ENCODE measurements at regions of chrX and their contacts with region 1.

Region 1: DNA sequence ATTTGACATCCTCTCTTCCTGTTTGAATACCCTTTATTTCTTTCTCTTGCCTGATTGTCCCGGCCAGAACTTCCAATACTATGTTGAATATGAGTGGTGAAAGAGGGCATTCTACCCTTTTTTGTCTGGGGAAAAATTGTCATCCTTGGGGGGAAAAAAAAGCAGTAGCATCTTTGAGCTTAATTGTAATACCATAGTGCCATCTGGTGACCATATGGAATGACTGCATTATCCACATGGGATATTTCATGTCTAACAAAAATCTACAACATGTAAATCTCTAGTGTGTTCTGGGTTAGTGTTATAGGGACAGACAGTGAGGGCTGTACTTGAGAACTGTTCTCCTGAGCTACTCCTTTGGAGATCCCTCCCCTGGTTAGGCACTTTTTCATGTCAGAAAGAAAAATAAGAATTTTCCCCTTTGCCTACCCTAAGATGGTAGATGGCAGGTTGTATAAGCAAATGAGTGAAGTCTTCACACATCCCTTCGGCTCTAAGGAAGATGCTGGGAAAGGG is 26.0 kb downstream of the CAPN6 start:
- DNase-seq: no peak
- ATAC-seq: 0 out of 3 replicates have a peak, but pooled peaks have one; percentile 34
- H3K4me3 ChIP-seq: no peak overlapping the region
- H3K27ac ChIP-seq: no peak overlapping the region
- H3K4me1 ChIP-seq: no peaks in the 10 kb centered on the region
- H3K27me3 ChIP-seq: no peaks in the 10 kb centered on the region
- CTCF ChIP-seq: peak; percentile 35 to 58 (median 51); a peak in 4 of 6 replicates
- EP300 ChIP-seq: no peak
- POLR2A ChIP-seq: no peak
- RAD21 ChIP-seq: peak; percentile 78

Region 2: DNA sequence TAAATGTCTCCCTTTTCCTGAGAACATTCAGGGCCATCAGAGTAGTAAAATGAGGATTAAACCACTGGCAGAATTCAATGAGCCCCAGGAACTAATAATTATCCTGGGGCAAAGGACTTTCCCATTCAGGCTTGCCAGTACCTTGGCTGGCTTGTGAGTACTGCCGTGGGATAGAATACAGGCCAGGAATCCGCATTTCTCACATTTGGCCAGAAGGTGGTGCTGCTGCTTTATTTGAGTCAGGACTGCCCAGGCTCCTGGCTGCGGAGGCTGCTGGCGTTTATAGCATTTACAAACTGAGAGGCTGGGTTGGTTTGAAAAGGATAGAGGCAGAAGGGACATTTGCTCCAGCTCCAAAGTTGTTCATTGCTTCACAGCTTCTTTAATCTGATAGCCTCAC is 794.2 kb before region 1 on chrX:
- CTCF ChIA-PET with region 1: no interaction called
- POLR2A ChIA-PET with region 1: no interaction called
- RAD21 ChIA-PET with region 1: no interaction called
- SMC1A ChIA-PET with region 1: no interaction called
- in situ Hi-C with region 1: no loop called
- intact Hi-C with region 1: loop called (anchors 5 kb)
- DNase-seq: peak; percentile 20
- ATAC-seq: peak; percentile 99
- H3K4me3 ChIP-seq: no peak overlapping the region
- H3K27ac ChIP-seq: no peak overlapping the region
- H3K4me1 ChIP-seq: no peaks in the 10 kb centered on the region
- H3K27me3 ChIP-seq: peaks cover 0 to 4% of the 10 kb centered on the region in 2 experiments; a peak in 2 of 4 replicates
- CTCF ChIP-seq: peak; percentile 78 to 85 (median 84)
- EP300 ChIP-seq: no peak
- POLR2A ChIP-seq: no peak
- RAD21 ChIP-seq: peak; percentile 89

Region 3: DNA sequence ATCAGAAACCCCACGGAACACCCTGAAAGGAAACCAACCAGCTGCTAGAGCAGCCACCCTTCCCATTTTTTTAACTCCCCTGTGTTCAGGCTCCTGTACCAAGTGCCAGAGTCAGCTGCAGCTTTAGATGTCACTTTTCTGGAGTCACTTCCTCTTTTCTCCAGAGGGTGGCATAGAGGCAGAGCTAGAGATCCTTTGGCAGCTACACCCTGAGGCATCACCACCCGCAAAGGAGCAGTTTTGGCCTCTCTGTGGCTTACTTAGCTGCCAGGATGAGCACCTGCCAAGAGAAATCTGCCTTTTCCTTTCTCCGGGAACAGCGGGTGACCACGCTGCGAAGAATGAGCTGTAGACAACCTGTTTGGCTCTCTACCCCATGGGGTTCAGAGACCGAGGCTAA is 390.7 kb before region 1 on chrX:
- CTCF ChIA-PET with region 1: interaction called, 4 read pairs
- POLR2A ChIA-PET with region 1: no interaction called
- RAD21 ChIA-PET with region 1: no interaction called
- SMC1A ChIA-PET with region 1: no interaction called
- in situ Hi-C with region 1: loop called (anchors 10 kb)
- intact Hi-C with region 1: loop called (anchors 10 kb)
- DNase-seq: no peak
- ATAC-seq: peak; percentile 67
- H3K4me3 ChIP-seq: no peak overlapping the region
- H3K27ac ChIP-seq: no peak overlapping the region
- H3K4me1 ChIP-seq: no peaks in the 10 kb centered on the region; the same call in 1 of the 2 replicates
- H3K27me3 ChIP-seq: no peaks in the 10 kb centered on the region
- CTCF ChIP-seq: 0 out of 6 replicates have a peak, but pooled peaks of 1 of the 3 experiments have one; percentile 8
- EP300 ChIP-seq: no peak
- POLR2A ChIP-seq: no peak
- RAD21 ChIP-seq: no peak

Region 4: DNA sequence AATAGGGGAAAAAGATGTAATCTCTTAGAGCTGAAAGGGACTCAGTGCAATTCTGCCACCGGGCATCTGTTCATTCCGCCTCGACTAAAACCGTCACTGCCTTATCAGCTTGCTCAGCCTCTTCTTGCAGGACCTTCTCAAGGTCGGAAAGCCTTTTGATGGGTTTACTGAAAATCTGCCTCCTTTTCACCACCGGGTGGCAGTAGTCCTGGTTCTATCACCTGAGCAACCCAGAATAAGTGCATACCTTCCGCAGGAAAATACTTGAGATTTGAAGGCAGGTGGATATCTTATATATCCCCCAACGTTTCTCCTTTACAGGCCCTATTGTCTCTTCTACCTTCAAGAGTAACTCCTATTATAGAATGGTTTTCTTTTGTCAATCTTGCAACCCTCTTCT is 251.7 kb before region 1 on chrX:
- CTCF ChIA-PET with region 1: interaction called, 5 read pairs
- POLR2A ChIA-PET with region 1: no interaction called
- RAD21 ChIA-PET with region 1: interaction called, 3 read pairs
- SMC1A ChIA-PET with region 1: interaction called, 3 read pairs
- in situ Hi-C with region 1: loop called (anchors 10 kb)
- intact Hi-C with region 1: loop called (anchors 1 kb)
- DNase-seq: no peak
- ATAC-seq: peak; percentile 76
- H3K4me3 ChIP-seq: no peak overlapping the region
- H3K27ac ChIP-seq: no peak overlapping the region
- H3K4me1 ChIP-seq: no peaks in the 10 kb centered on the region
- H3K27me3 ChIP-seq: no peaks in the 10 kb centered on the region
- CTCF ChIP-seq: peak; percentile 49 to 61 (median 56)
- EP300 ChIP-seq: no peak
- POLR2A ChIP-seq: no peak
- RAD21 ChIP-seq: peak; percentile 40; the same call in 1 of the 2 replicates

Region 5: GRCh38 chrX:111098874-111099273 is 145.4 kb before region 1 on chrX:
- CTCF ChIA-PET with region 1: interaction called, 22 read pairs
- POLR2A ChIA-PET with region 1: no interaction called
- RAD21 ChIA-PET with region 1: interaction called, 5 read pairs
- SMC1A ChIA-PET with region 1: interaction called, 7 read pairs
- in situ Hi-C with region 1: loop called (anchors 10 kb)
- intact Hi-C with region 1: loop called (anchors 2 kb)
- DNase-seq: no peak
- ATAC-seq: peak; percentile 88
- H3K4me3 ChIP-seq: no peak overlapping the region
- H3K27ac ChIP-seq: no peak overlapping the region
- H3K4me1 ChIP-seq: no peaks in the 10 kb centered on the region
- H3K27me3 ChIP-seq: peaks cover 0 to 3% of the 10 kb centered on the region in 2 experiments; a peak in 1 of 4 replicates
- CTCF ChIP-seq: peak; percentile 68 to 87 (median 73)
- EP300 ChIP-seq: no peak
- POLR2A ChIP-seq: no peak
- RAD21 ChIP-seq: peak; percentile 64

Region 6: DNA sequence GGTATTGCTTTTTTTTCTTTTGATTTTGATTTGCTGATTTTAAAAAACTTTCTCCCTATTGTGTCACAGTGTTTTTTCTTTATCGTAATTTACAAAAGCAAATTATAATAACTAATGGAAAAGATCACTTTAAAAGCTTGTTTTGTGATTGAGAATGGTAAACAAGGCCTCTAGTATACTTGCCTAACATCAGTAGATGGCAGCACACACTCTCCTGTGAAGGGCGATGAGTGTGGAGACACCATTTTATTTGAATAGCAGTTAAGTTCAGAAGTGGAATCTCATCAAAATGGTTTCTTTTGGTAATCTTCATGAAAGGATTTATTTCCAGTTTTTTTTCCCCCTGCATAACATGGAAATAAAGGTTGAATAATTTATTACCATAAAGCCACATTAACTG is 76.0 kb before region 1 on chrX:
- CTCF ChIA-PET with region 1: no interaction called
- POLR2A ChIA-PET with region 1: no interaction called
- RAD21 ChIA-PET with region 1: no interaction called
- SMC1A ChIA-PET with region 1: interaction called, 4 read pairs
- in situ Hi-C with region 1: no loop called
- intact Hi-C with region 1: loop called (anchors 5 kb)
- DNase-seq: no peak
- ATAC-seq: peak; percentile 49; the same call in 1 of the 3 replicates
- H3K4me3 ChIP-seq: no peak overlapping the region
- H3K27ac ChIP-seq: no peak overlapping the region
- H3K4me1 ChIP-seq: no peaks in the 10 kb centered on the region
- H3K27me3 ChIP-seq: no peaks in the 10 kb centered on the region
- CTCF ChIP-seq: peak in 2 of 3 experiments; percentile 9 to 29; a peak in 2 of 6 replicates
- EP300 ChIP-seq: no peak
- POLR2A ChIP-seq: no peak
- RAD21 ChIP-seq: peak; percentile 40; the same call in 1 of the 2 replicates